Activated CD4-positive, alpha-beta memory T cell treated with anti-CD3 and anti-CD28 coated beads for 36 hours (primary cell): ENCODE measurements at regions of chr1 and their contacts with region 1.

Region 1: DNA sequence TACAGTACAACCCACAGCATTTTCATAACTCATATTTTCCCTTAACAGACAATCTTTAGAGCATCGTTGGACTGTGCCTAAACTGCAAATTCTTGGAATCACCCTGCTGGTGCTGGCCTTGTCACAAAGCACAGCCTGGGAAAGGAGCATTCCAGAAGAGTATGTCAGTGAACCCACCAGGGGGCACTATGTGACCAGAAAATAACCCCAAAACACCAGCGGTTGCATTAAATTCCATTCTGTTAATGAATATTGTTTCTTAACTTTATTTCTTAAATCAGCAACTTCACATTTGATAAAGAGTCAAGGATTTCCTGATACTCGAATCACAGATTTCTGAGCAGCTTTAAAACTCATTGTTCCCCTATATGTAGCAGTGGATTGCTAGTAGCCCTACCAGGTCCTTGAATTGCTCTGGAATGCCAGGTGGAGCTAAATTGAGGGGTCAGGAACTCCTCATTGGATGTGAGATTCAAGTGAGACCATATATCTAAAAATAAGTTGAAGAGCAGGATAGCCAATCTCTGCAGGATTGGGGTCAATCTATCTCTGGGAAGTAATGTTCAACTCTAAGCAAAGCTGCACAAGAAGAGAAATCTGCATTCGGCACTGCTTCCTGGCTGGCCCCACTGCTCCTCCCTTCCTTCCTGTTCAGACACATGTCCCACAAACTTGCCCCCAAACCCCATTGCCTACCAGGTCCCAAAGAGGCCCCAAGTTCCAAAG is 12.7 kb upstream of the RAB4A start:
- DNase-seq: peak; percentile 69
- H3K4me3 Mint-ChIP-seq: no peak overlapping the region
- H3K27ac Mint-ChIP-seq: no peak overlapping the region
- H3K4me1 Mint-ChIP-seq: peaks cover 29% of the 10 kb centered on the region
- H3K27me3 Mint-ChIP-seq: no peaks in the 10 kb centered on the region

Region 2: DNA sequence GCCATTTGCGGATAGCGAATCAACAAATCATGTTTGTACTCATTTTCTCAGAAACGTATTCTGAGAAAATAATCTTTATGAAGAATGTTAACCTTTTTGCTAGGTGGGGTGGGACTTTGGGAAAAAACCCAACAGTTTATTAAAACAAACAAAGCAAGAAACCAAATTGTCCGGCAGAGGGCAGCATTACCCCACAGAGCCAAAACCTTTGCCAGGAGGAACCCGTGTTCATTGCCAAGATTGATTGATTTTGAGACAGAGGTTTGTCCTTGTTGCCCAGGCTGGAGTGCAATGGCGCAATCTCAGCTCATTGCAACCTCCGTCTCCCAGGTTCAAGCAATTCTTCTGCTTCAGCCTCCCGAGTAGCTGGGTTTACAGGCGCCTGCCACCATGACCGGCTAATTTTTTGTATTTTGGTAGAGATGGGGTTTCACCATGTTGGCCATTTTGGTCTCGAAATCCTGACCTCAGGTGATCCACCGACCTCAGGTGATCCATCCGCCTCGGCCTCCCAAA is 593.7 kb before region 1 on chr1:
- CTCF ChIA-PET with region 1: interaction called, 23 read pairs
- POLR2A ChIA-PET with region 1: no interaction called
- intact Hi-C with region 1: no loop called
- DNase-seq: peak; percentile 83
- H3K4me3 Mint-ChIP-seq: no peak overlapping the region
- H3K27ac Mint-ChIP-seq: no peak overlapping the region
- H3K4me1 Mint-ChIP-seq: no peaks in the 10 kb centered on the region
- H3K27me3 Mint-ChIP-seq: no peaks in the 10 kb centered on the region

Region 3: GRCh38 chr1:228823200-228823599 is 435.0 kb before region 1 on chr1:
- CTCF ChIA-PET with region 1: no interaction called
- POLR2A ChIA-PET with region 1: no interaction called
- intact Hi-C with region 1: no loop called
- DNase-seq: no peak
- H3K4me3 Mint-ChIP-seq: no peak overlapping the region
- H3K27ac Mint-ChIP-seq: no peak overlapping the region
- H3K4me1 Mint-ChIP-seq: peaks cover 21% of the 10 kb centered on the region
- H3K27me3 Mint-ChIP-seq: peaks cover 4% of the 10 kb centered on the region

Region 4: GRCh38 chr1:229341774-229342655 is 83.8 kb after region 1 on chr1:
- CTCF ChIA-PET with region 1: interaction called, 5 read pairs
- POLR2A ChIA-PET with region 1: interaction called, 3 read pairs
- intact Hi-C with region 1: loop called (anchors 10 kb)
- DNase-seq: peak; percentile 83
- H3K4me3 Mint-ChIP-seq: peak overlapping the region; percentile 81
- H3K27ac Mint-ChIP-seq: peak overlapping the region; percentile 70
- H3K4me1 Mint-ChIP-seq: peaks cover 54% of the 10 kb centered on the region
- H3K27me3 Mint-ChIP-seq: peaks cover 7% of the 10 kb centered on the region

Region 5: DNA sequence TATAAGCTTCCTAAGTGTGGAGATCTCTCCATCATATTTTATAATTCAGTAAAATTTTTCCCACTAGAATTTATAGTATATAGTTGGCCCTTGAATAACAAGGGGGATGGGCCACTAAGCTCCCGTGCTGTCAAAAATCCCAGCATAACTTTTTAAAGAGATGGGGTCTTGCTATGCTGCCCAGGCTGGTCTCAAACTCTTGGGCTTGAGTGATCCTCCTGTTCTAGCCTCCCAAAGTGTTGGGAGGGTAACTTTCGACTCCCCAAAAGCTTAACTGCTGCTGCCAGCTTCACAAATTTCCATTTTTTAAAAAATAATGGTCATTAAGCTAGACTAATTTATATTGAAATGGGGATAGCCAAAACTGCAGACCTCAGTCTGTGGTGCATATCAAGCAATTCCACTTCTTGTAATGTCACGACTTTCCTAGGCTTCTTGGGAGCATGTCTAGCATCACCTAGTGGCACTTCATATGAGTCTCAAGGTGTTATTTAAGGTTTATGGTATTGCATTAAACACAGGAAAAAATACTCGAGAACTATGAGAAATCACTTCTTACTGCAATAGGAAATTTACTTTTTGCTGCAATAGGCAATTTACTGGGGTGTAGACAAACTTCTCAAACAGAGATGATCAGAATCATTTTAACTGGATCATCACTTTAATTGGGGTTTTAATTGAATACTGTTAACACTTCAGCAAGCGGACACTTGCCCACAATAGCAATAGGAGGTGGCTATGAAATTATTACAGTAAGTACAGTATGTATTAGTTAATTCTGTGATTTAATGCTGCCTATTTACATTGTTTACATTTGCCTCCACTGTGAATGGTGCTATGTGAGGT is 195.0 kb after region 1 on chr1:
- CTCF ChIA-PET with region 1: interaction called, 15 read pairs
- POLR2A ChIA-PET with region 1: no interaction called
- intact Hi-C with region 1: no loop called
- DNase-seq: no peak
- H3K4me3 Mint-ChIP-seq: no peak overlapping the region
- H3K27ac Mint-ChIP-seq: no peak overlapping the region
- H3K4me1 Mint-ChIP-seq: no peaks in the 10 kb centered on the region
- H3K27me3 Mint-ChIP-seq: no peaks in the 10 kb centered on the region

Region 6: GRCh38 chr1:229507951-229508822 is 250.0 kb after region 1 on chr1 and contains the start of gene NUP133:
- CTCF ChIA-PET with region 1: interaction called, 14 read pairs
- POLR2A ChIA-PET with region 1: no interaction called
- intact Hi-C with region 1: no loop called
- DNase-seq: peak; percentile 99
- H3K4me3 Mint-ChIP-seq: peak within 1 kb of the TSS; percentile 93
- H3K27ac Mint-ChIP-seq: peak within 1 kb of the TSS; percentile 83
- H3K4me1 Mint-ChIP-seq: peaks cover 26% of the 10 kb centered on the region
- H3K27me3 Mint-ChIP-seq: peaks cover 2% of the 10 kb centered on the region
- total RNA-seq, gene NUP133: 54.1 to 57.0 TPM

Region 7: DNA sequence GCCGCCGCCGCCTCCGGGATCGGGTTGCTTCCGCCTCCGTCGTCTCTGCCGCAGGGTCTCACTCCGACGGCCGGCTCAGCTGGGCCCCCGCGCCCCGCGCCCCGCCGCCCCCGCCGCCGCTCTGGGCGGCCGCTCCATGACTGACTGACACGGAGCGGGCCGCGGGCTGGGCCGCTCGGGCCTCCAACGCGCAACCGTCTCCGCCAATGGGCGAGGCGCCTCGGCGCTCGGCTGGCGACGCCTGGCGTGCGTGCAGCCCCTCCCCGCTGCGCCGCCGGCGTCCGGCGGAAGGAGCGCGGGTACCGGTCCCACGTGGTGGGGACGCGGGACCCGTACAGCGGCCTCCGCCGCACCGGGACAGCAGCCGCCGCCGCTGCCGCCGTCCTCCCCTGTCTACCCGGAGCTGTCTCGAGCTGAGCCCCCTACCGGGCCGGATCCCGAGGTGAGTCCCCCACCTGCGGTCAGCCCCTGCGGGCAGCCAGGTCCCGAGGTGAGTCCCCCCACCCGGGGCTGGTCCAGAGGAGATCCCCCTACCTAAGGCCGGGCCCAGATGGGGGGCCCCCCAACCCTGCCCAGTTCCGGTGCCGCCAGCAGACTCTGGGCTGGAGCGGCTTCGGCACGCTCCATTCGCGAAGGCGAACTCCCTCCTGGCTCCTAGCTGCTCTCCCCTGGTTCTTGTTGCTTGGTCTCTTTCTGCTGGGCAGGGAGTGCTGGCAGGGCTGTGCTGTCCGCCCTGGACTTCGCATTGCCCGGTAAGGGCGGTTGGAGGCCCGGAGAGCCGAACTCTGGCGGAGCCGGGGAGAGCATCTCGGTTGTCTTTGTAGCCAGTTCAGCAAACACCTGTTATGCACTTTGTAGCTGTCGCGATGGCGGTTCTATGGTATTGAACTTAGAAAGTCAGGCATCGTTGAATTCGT is 368.0 kb after region 1 on chr1 and contains the starts of genes TAF5L and URB2:
- CTCF ChIA-PET with region 1: no interaction called
- POLR2A ChIA-PET with region 1: interaction called, 3 read pairs
- intact Hi-C with region 1: loop called (anchors 10 kb)
- DNase-seq: peak; percentile 91
- H3K4me3 Mint-ChIP-seq: peak within 1 kb of the TSS; percentile 99
- H3K27ac Mint-ChIP-seq: peak within 1 kb of the TSS; percentile 89
- H3K4me1 Mint-ChIP-seq: peaks cover 65% of the 10 kb centered on the region
- H3K27me3 Mint-ChIP-seq: no peaks in the 10 kb centered on the region
- total RNA-seq, gene TAF5L: 14.1 to 17.8 TPM
- total RNA-seq, gene URB2: 13.8 to 14.6 TPM